ENCODE measurements at regions of chr19 and their contacts with region 1.

Region 1: GRCh38 chr19:46990991-46991676 is 28.5 kb upstream of the NPAS1 start:
- DNase-seq: peak in 8 of 9 donors; percentile 21 to 63 (median 31)
- ATAC-seq: peak; percentile 66
- H3K4me3 ChIP-seq: no peak overlapping the region
- H3K4me3 Mint-ChIP-seq: peak overlapping the region in 1 of 10 donors; percentile 19
- H3K27ac ChIP-seq: no peak overlapping the region
- H3K27ac Mint-ChIP-seq: peak overlapping the region in 2 of 9 donors; percentile 28 to 49
- H3K4me1 ChIP-seq: peaks cover 3 to 9% of the 10 kb centered on the region in 2 donors
- H3K4me1 Mint-ChIP-seq: peaks cover 5 to 15% (median 11%) of the 10 kb centered on the region in 7 donors
- H3K27me3 ChIP-seq: no peaks in the 10 kb centered on the region
- H3K27me3 Mint-ChIP-seq: no peaks in the 10 kb centered on the region

Region 2: GRCh38 chr19:46924874-46925547 is 66.1 kb before region 1 on chr19:
- CTCF ChIA-PET with region 1: interaction called, 4 read pairs
- POLR2A ChIA-PET with region 1: no interaction called
- intact Hi-C with region 1: loop called in 1 of 2 experiments (anchors 5 kb)
- DNase-seq: peak in 1 of 9 donors; percentile 1
- ATAC-seq: peak; percentile 61
- H3K4me3 ChIP-seq: no peak overlapping the region
- H3K4me3 Mint-ChIP-seq: no peak overlapping the region
- H3K27ac ChIP-seq: no peak overlapping the region
- H3K27ac Mint-ChIP-seq: peak overlapping the region in 4 of 9 donors; percentile 1 to 82 (median 14)
- H3K4me1 ChIP-seq: peaks cover 12 to 43% of the 10 kb centered on the region in 2 donors
- H3K4me1 Mint-ChIP-seq: peaks cover 23 to 51% (median 46%) of the 10 kb centered on the region in 7 donors
- H3K27me3 ChIP-seq: no peaks in the 10 kb centered on the region
- H3K27me3 Mint-ChIP-seq: no peaks in the 10 kb centered on the region

Measured in naive thymus-derived CD4-positive, alpha-beta T cell (primary cell).